Caco-2 (cell line): ENCODE measurements at regions of chr19 and their contacts with region 1.

Region 1: DNA sequence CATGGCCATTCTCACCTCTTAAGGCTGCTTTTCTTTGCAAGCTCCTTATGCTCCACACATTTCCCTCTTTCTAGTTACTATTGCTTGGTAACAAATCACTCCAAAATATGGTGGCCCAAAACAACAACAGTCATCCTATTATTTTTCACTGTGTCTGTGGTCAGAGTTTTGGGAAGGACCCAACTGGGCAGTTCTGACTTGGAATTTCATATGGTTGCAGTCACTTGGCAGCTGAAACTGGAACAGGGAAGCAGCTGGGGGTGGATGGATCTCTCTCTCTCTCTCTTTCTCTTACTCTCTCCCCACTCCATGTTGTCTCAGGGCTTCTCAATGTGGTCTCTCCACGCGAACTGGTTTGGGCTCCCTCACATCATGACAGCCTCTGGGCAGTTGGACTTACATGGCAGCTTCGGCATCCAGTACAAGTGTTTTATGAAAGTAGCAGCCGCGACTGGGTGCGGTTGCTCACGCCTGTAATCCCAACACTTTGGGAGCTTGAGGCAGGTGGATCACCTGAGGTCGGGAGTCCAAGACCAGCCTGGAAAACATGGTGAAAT is 39.6 kb downstream of the NUMBL start:
- DNase-seq: no peak
- H3K4me3 ChIP-seq: no peak overlapping the region
- H3K4me3 Mint-ChIP-seq: peak overlapping the region; percentile 29
- H3K27ac Mint-ChIP-seq: no peak overlapping the region
- H3K4me1 ChIP-seq: 0 out of 2 replicates have a peak, but pooled peaks cover under 1% of the 10 kb centered on the region
- H3K4me1 Mint-ChIP-seq: peaks cover 7% of the 10 kb centered on the region
- H3K27me3 ChIP-seq: no peaks in the 10 kb centered on the region
- H3K27me3 Mint-ChIP-seq: no peaks in the 10 kb centered on the region
- CTCF ChIP-seq: no peak

Region 2: GRCh38 chr19:40674291-40674690 is 23.5 kb after region 1 on chr19:
- CTCF ChIA-PET with region 1: no interaction called
- POLR2A ChIA-PET with region 1: interaction called, 14 read pairs
- intact Hi-C with region 1: no loop called
- DNase-seq: no peak
- H3K4me3 ChIP-seq: no peak overlapping the region
- H3K4me3 Mint-ChIP-seq: no peak overlapping the region
- H3K27ac Mint-ChIP-seq: no peak overlapping the region
- H3K4me1 ChIP-seq: no peaks in the 10 kb centered on the region
- H3K4me1 Mint-ChIP-seq: no peaks in the 10 kb centered on the region
- H3K27me3 ChIP-seq: no peaks in the 10 kb centered on the region
- H3K27me3 Mint-ChIP-seq: no peaks in the 10 kb centered on the region
- CTCF ChIP-seq: no peak